ENCODE measurements at regions of chr3 and their contacts with region 1.

Region 1: GRCh38 chr3:99023590-99024192 is 122.2 kb upstream of the DCBLD2 start:
- DNase-seq: no peak
- ATAC-seq: no peak
- H3K4me3 ChIP-seq: no peak overlapping the region
- H3K27ac ChIP-seq: no peak overlapping the region
- H3K4me1 ChIP-seq: no peaks in the 10 kb centered on the region
- H3K27me3 ChIP-seq: no peaks in the 10 kb centered on the region
- CTCF ChIP-seq: peak; percentile 74; the same call in 1 of the 2 replicates

Region 2: DNA sequence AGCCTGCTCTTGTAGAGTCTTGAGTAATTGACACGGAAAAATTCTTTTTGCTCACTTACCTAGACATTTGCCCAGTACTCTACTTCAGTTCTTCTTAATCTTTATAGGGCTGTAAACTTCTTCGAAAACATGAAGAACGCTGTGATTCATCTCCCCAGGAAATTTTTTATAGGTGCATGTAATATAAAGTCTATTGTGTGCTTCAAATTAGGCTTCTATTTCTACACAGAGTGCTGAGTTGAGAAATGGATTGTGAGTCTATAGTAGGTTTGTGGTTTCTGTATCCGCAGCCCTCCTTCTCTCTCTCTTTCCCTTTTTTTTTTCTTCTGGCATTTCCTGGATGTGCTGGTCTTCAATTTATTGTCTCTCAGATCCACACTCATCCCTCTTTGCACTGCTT is 61.1 kb after region 1 on chr3:
- CTCF ChIA-PET with region 1: no interaction called
- POLR2A ChIA-PET with region 1: no interaction called
- in situ Hi-C with region 1: no loop called
- intact Hi-C with region 1: no loop called
- DNase-seq: no peak
- ATAC-seq: no peak
- H3K4me3 ChIP-seq: no peak overlapping the region
- H3K27ac ChIP-seq: no peak overlapping the region
- H3K4me1 ChIP-seq: no peaks in the 10 kb centered on the region
- H3K27me3 ChIP-seq: no peaks in the 10 kb centered on the region
- CTCF ChIP-seq: no peak

Region 3: GRCh38 chr3:99172736-99173657 is 149.3 kb after region 1 on chr3:
- CTCF ChIA-PET with region 1: interaction called, 4 read pairs
- POLR2A ChIA-PET with region 1: no interaction called
- in situ Hi-C with region 1: no loop called
- intact Hi-C with region 1: loop called (anchors 2 kb)
- DNase-seq: peak; percentile 32
- ATAC-seq: peak; percentile 79
- H3K4me3 ChIP-seq: no peak overlapping the region
- H3K27ac ChIP-seq: no peak overlapping the region
- H3K4me1 ChIP-seq: no peaks in the 10 kb centered on the region
- H3K27me3 ChIP-seq: no peaks in the 10 kb centered on the region
- CTCF ChIP-seq: peak; percentile 85

Region 4: DNA sequence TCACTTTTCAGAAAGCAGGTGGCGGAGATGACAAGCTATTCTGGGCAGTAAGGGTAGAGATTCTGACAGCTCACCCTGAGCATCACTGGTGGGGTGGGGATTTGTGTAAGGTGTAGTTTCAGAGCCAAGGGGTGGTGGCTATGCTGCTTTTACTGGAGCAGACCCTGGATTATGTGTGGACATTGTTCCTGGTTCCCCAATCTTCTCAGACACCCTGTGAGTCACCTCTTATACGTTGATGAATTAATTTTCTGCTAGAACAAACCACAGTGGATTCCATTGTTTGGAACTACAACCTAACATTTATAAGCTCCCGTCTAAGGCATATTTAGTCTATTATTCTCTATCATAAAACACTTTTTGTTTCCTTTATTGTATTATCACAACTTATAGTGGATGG is 445.2 kb after region 1 on chr3:
- CTCF ChIA-PET with region 1: no interaction called
- POLR2A ChIA-PET with region 1: no interaction called
- in situ Hi-C with region 1: no loop called
- intact Hi-C with region 1: loop called (anchors 10 kb)
- DNase-seq: no peak
- ATAC-seq: no peak
- H3K4me3 ChIP-seq: no peak overlapping the region
- H3K27ac ChIP-seq: no peak overlapping the region
- H3K4me1 ChIP-seq: no peaks in the 10 kb centered on the region
- H3K27me3 ChIP-seq: no peaks in the 10 kb centered on the region
- CTCF ChIP-seq: no peak

Region 5: GRCh38 chr3:99686955-99687612 is 663.4 kb after region 1 on chr3:
- CTCF ChIA-PET with region 1: no interaction called
- POLR2A ChIA-PET with region 1: no interaction called
- in situ Hi-C with region 1: no loop called
- intact Hi-C with region 1: loop called (anchors 5 kb)
- DNase-seq: peak; percentile 39
- ATAC-seq: peak; percentile 84
- H3K4me3 ChIP-seq: no peak overlapping the region
- H3K27ac ChIP-seq: no peak overlapping the region
- H3K4me1 ChIP-seq: no peaks in the 10 kb centered on the region
- H3K27me3 ChIP-seq: peaks cover 13% of the 10 kb centered on the region
- CTCF ChIP-seq: peak; percentile 91